Heart left ventricle (tissue), 16 donors: ENCODE measurements at regions of chr12 and their contacts with region 1.

Region 1: DNA sequence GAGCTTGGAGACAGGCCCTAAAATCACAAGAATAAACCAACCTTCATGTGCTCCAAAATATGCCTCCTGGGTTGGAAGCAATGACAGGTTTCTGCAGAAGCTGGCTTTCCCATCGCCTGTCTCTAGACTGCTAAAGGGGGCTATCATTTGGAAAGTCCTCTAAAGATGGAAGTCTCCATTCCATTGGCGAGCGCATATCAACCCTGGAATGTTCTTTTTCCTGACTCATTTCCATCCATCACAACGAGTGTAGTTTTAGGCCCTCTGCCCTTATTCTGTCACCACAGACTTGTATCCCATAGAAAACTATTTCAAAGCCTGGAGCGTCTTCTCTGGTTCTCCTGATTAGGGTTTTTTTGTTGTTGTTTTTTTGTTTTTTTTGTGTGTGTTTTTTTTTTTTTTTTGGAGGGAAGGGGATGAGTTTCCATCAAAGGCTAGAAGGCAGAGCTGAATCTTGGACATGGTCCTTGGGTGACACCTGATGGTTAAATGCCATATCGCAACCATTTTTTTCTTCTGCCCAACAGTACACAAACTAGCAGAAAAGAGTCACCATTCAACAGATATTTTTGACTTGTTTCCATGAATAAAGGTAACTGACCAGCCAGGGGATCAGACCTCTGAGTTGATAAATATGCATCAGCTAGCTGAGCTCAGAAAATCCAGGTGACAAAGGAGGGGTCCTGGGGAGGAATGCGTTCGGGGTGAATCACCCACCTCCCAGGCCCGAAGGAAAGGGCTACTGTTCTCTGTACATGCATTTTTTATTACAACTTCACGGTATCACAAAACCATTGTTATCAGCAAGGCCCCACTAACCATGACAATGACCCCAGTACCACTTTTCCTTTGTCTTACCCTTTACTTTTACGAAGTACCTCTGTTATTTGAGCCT is 40.5 kb downstream of the KCNA5 start:
- DNase-seq: peak in 1 of 5 donors; percentile 30
- ATAC-seq: peak in 3 of 4 donors; percentile 41 to 63 (median 49)
- H3K4me3 ChIP-seq: no peak overlapping the region
- H3K27ac ChIP-seq: no peak overlapping the region
- H3K4me1 ChIP-seq: peaks cover 0 to 9% (median 0%) of the 10 kb centered on the region in 12 donors
- H3K27me3 ChIP-seq: no peaks in the 10 kb centered on the region
- CTCF ChIP-seq: peak; percentile 63 to 92 (median 77)
- POLR2A ChIP-seq: no peak

Region 2: GRCh38 chr12:5003020-5003666 is 81.1 kb before region 1 on chr12:
- intact Hi-C with region 1: no loop called
- DNase-seq: peak; percentile 54 to 77 (median 71)
- ATAC-seq: peak; percentile 82 to 91 (median 89)
- H3K4me3 ChIP-seq: no peak overlapping the region
- H3K27ac ChIP-seq: no peak overlapping the region
- H3K4me1 ChIP-seq: peaks cover 0 to 6% (median 2%) of the 10 kb centered on the region in 12 donors
- H3K27me3 ChIP-seq: peaks cover 0 to 10% (median 0%) of the 10 kb centered on the region in 9 donors
- CTCF ChIP-seq: peak; percentile 75 to 93 (median 86)
- POLR2A ChIP-seq: no peak

Region 3: GRCh38 chr12:5022465-5023061 is 61.6 kb before region 1 on chr12:
- intact Hi-C with region 1: loop called (anchors 1 kb)
- DNase-seq: peak in 4 of 5 donors; percentile 32 to 45 (median 43)
- ATAC-seq: peak; percentile 29 to 71 (median 44)
- H3K4me3 ChIP-seq: no peak overlapping the region
- H3K27ac ChIP-seq: no peak overlapping the region
- H3K4me1 ChIP-seq: peaks cover 0 to 24% (median 0%) of the 10 kb centered on the region in 12 donors
- H3K27me3 ChIP-seq: peaks cover 0 to 6% (median 0%) of the 10 kb centered on the region in 9 donors
- CTCF ChIP-seq: peak; percentile 87 to 98 (median 92)
- POLR2A ChIP-seq: no peak

Region 4: DNA sequence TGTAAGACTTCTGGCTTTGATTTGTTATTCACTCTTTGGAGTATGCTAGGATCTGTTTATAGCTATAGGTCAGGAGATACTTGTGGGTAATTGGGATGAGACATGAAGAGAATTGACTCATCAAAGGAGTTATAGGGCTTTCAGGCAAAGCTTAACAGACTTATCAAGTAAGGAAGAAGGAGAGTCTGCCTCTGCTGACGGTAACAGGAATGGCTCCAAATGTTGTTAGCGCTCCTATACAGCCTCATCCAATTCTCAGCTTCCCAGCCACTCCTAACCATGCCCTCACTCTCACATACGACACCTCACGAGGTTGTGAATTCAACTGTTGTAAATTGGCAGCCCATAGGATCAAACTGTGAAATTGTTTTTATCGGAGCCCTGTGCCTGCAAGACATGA is 100.0 kb after region 1 on chr12:
- intact Hi-C with region 1: no loop called
- DNase-seq: no peak
- ATAC-seq: no peak
- H3K4me3 ChIP-seq: no peak overlapping the region
- H3K27ac ChIP-seq: no peak overlapping the region
- H3K4me1 ChIP-seq: no peaks in the 10 kb centered on the region
- H3K27me3 ChIP-seq: peaks cover 0 to 6% (median 0%) of the 10 kb centered on the region in 9 donors
- CTCF ChIP-seq: no peak
- POLR2A ChIP-seq: no peak